ENCODE measurements at regions of chr11 and their contacts with region 1.

Region 1: GRCh38 chr11:34438529-34439507 is at the start of gene CAT:
- DNase-seq: peak; percentile 96 to 98 (median 97)
- ATAC-seq: peak; percentile 94
- H3K4me3 ChIP-seq: peak within 1 kb of the TSS; percentile 97 to 98
- H3K4me3 Mint-ChIP-seq: peak within 1 kb of the TSS; percentile 94
- H3K27ac ChIP-seq: peak within 1 kb of the TSS; percentile 80 to 81
- H3K27ac Mint-ChIP-seq: peak within 1 kb of the TSS; percentile 96
- H3K4me1 ChIP-seq: peaks cover 18% of the 10 kb centered on the region
- H3K4me1 Mint-ChIP-seq: peaks cover 49% of the 10 kb centered on the region
- H3K27me3 ChIP-seq: no peaks in the 10 kb centered on the region
- H3K27me3 Mint-ChIP-seq: no peaks in the 10 kb centered on the region
- CTCF ChIP-seq: no peak
- total RNA-seq, gene CAT: 8.2 to 8.7 TPM

Region 2: DNA sequence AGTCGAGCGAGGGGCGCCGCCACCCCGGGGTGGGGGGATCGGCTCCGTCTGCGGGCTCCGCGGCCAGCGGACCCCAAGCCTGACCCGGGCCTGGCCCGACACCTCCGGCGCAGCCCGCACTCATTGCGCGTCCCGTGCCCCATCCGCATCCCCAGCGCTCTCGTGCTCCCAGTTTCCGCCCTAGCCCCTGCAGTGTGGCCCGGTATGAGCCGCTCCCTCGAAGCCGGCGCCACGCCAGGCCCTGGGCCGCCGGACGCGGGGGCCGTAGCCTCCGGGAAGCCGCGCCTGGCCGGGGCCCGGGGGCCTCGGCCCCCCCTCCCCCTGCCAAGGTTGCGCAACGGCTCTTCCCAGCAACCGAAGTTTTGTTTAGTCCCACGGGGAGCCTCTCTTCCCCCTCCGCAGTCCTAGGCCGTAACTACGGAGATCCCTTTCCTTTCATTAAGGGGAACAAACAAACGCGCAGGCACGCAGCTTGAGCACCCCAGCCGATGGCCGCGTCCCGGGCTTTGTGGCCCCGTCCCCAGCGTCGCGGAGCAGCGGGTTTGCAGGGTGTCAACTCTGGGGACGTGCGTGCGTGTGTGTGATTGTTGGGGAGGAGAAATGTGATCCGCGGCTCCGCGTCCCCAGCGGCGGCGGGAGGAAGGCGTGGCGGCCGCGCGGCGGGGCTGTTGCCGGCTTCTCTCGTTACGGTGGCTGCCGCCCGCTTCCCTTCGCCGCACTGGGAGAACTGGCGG is 1180.8 kb before region 1 on chr11:
- CTCF ChIA-PET with region 1: no interaction called
- POLR2A ChIA-PET with region 1: interaction called, 3 read pairs
- intact Hi-C with region 1: loop called in 1 of 2 experiments (anchors 5 kb)
- DNase-seq: peak; percentile 48 to 88 (median 73)
- ATAC-seq: peak; percentile 61
- H3K4me3 ChIP-seq: peak overlapping the region; percentile 72 to 98
- H3K4me3 Mint-ChIP-seq: peak overlapping the region; percentile 93
- H3K27ac ChIP-seq: peak overlapping the region; percentile 92 to 98
- H3K27ac Mint-ChIP-seq: peak overlapping the region; percentile 99
- H3K4me1 ChIP-seq: peaks cover 28% of the 10 kb centered on the region
- H3K4me1 Mint-ChIP-seq: peaks cover 46% of the 10 kb centered on the region
- H3K27me3 ChIP-seq: no peaks in the 10 kb centered on the region
- H3K27me3 Mint-ChIP-seq: no peaks in the 10 kb centered on the region
- CTCF ChIP-seq: peak; percentile 23

Region 3: DNA sequence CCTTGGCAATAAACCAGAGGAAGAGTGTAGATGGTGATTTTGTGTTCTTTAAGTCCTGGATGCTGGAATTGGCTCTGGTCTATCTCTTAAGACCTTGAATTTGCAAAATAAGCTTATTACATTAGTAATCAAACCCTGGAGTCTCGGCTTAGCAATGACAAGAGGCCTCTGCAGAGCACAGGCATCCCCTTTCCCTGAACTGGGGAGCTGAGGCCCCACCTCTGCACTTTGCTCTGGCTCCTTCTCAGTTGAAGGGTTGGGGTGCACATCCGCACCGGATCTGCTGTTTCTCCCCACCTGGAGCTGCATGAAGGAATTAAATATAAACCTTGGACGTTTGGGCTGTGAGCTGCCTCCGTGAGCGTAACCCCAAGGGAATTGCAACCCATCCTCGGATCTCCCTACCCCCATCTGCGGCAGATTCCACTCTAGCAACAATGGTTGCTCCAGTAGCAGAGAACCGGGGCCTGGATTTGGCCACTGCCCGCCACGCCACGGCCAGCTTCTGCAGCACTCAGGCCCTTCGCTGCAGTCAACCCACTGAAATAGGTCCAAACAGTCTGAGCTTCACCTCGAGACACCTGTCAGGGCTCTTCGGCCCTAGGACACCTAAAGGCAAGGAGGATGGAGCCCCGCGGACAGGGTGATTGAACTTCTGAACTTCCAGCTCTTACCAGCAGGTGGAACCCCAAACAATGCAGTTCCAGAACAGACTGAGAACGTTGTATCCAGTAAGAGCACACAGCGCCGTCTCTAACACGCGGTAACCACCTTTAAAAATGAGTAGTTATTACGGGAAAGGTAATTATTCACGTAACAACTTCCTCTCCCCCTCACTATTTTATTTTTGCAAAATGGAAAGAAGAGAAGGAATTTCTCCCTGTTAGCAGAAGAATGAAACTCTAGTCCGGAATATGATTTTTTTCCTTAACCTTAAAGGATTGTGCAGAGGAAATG is 442.0 kb before region 1 on chr11:
- CTCF ChIA-PET with region 1: no interaction called
- POLR2A ChIA-PET with region 1: no interaction called
- intact Hi-C with region 1: loop called in 1 of 2 experiments (anchors 1 kb)
- DNase-seq: peak; percentile 50 to 84 (median 75)
- ATAC-seq: peak; percentile 100
- H3K4me3 ChIP-seq: no peak overlapping the region
- H3K4me3 Mint-ChIP-seq: peak overlapping the region; percentile 59
- H3K27ac ChIP-seq: no peak overlapping the region
- H3K27ac Mint-ChIP-seq: no peak overlapping the region
- H3K4me1 ChIP-seq: peaks cover 7% of the 10 kb centered on the region
- H3K4me1 Mint-ChIP-seq: peaks cover 13% of the 10 kb centered on the region
- H3K27me3 ChIP-seq: peaks cover 0 to 2% of the 10 kb centered on the region in 2 experiments
- H3K27me3 Mint-ChIP-seq: peaks cover 18% of the 10 kb centered on the region
- CTCF ChIP-seq: peak; percentile 75

Region 4: GRCh38 chr11:34174412-34175041 is 264.3 kb before region 1 on chr11:
- CTCF ChIA-PET with region 1: no interaction called
- POLR2A ChIA-PET with region 1: no interaction called
- intact Hi-C with region 1: loop called in 1 of 2 experiments (anchors 10 kb)
- DNase-seq: peak; percentile 61 to 87 (median 81)
- ATAC-seq: peak; percentile 100
- H3K4me3 ChIP-seq: peak overlapping the region in 1 of 2 experiments; percentile 18
- H3K4me3 Mint-ChIP-seq: peak overlapping the region; percentile 43
- H3K27ac ChIP-seq: no peak overlapping the region
- H3K27ac Mint-ChIP-seq: no peak overlapping the region
- H3K4me1 ChIP-seq: peaks cover 4% of the 10 kb centered on the region
- H3K4me1 Mint-ChIP-seq: peaks cover 3% of the 10 kb centered on the region
- H3K27me3 ChIP-seq: no peaks in the 10 kb centered on the region
- H3K27me3 Mint-ChIP-seq: peaks cover 4% of the 10 kb centered on the region
- CTCF ChIP-seq: peak; percentile 79

Region 5: DNA sequence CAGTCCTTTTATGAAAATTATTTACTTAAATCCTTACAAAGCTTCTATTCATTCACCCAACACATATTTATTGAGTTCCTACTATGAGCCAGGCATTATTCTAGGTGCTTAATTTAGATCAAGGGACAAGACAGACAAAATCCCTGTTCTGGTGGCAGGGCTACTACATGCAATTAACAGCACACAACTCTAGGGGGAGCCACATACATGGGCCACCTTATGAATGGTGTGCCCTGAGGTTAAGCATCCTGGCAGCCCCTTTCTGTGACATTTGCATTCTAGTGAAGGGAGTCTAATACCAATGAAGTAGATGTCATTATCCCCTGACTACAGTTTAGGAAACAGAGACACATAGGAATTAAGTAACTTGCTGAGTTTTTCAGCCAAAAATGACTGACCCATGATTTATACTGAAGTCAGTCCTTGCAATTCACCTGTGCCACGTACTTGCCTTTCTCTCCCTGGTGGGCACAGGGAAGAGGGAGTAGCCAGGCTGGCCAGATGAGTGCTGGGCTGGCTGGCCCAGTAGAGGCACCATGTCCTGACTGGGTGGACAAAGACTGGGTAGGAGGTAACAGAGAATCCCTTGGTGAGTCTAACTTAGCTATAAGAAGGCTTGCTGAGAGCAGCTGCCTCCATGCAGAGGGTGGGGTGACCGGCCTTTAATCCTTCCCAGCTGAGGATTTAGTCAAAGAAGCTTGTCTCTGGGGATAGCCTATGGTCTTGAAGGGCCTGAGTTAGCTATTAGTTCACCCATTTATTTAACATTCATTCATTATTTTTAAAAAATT is 126.8 kb after region 1 on chr11:
- CTCF ChIA-PET with region 1: no interaction called
- POLR2A ChIA-PET with region 1: no interaction called
- intact Hi-C with region 1: no loop called
- DNase-seq: peak in 1 of 9 experiments; percentile 4
- ATAC-seq: no peak
- H3K4me3 ChIP-seq: no peak overlapping the region
- H3K4me3 Mint-ChIP-seq: no peak overlapping the region
- H3K27ac ChIP-seq: no peak overlapping the region
- H3K27ac Mint-ChIP-seq: no peak overlapping the region
- H3K4me1 ChIP-seq: no peaks in the 10 kb centered on the region
- H3K4me1 Mint-ChIP-seq: no peaks in the 10 kb centered on the region
- H3K27me3 ChIP-seq: no peaks in the 10 kb centered on the region
- H3K27me3 Mint-ChIP-seq: peaks cover 35% of the 10 kb centered on the region
- CTCF ChIP-seq: no peak

Region 6: DNA sequence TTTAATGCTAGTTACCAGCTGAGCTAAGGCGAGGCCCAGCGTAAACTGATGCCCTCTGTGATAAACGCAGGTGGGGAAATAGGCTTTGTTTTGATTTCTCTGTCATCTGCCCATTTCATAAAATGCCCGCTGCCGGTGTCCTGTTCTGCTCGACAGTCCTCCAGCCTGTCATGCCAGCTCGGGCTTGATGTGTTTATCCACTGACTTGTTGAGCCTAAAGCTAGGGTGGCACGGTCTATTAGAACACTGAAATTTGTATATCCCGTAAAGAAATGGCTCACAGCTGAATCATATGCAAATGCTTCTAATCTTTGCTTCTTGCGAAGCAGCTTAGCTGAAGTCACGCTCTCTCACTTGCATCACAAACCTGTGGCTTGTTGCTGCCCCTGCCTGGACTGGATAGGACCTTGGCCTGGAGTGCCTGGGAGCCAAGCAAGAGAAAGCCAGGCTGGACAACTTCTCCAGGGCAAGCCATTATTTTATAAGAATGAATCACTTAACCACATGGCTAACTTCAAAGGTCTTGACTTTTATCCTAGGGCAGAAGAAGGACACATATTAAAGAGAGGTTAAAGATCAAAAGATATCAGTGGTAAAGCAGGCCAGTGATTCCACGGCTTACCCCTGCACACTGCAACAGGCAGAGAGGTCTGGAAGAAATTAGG is 215.1 kb after region 1 on chr11:
- CTCF ChIA-PET with region 1: no interaction called
- POLR2A ChIA-PET with region 1: no interaction called
- intact Hi-C with region 1: loop called in 1 of 2 experiments (anchors 1 kb)
- DNase-seq: peak in 1 of 9 experiments; percentile 19
- ATAC-seq: no peak
- H3K4me3 ChIP-seq: no peak overlapping the region
- H3K4me3 Mint-ChIP-seq: no peak overlapping the region
- H3K27ac ChIP-seq: no peak overlapping the region
- H3K27ac Mint-ChIP-seq: no peak overlapping the region
- H3K4me1 ChIP-seq: peaks cover 43% of the 10 kb centered on the region
- H3K4me1 Mint-ChIP-seq: peaks cover 38% of the 10 kb centered on the region
- H3K27me3 ChIP-seq: peaks cover 0 to 3% of the 10 kb centered on the region in 2 experiments
- H3K27me3 Mint-ChIP-seq: peaks cover 32% of the 10 kb centered on the region
- CTCF ChIP-seq: no peak

Measured in CD8-positive, alpha-beta T cell (primary cell).